Endothelial cell of umbilical vein (primary cell): ENCODE measurements at regions of chr1 and their contacts with region 1.

Region 1: DNA sequence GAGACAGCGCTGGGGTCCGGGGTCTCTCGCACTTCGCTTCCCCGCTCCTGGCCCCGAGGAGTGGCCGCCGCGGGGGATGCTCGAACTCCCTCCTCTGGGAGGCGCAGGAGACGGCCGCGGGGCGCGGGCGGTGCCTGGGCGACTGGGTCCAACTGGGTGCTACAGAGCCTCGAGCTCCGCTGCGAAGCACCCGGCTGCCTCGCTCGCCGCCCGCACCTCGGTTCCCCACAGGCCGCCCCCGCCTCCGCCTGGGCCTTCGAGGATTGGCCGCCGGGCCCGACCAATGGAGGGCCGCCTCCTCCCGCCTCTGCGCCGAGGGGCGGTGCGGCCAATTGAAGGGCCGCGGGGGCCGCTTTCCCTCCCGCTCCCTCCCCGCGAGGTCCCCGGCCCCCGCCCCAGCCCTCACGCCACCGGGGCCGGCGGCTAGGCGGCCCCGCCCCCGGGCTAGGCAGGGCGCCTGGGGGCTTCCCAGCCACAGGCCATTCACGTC is at the start of gene CNN3:
- DNase-seq: peak; percentile 93
- H3K4me3 ChIP-seq: peak within 1 kb of the TSS; percentile 75 to 99 (median 90)
- H3K27ac ChIP-seq: peak within 1 kb of the TSS; percentile 100
- H3K4me1 ChIP-seq: peaks cover 49% of the 10 kb centered on the region
- H3K27me3 ChIP-seq: no peaks in the 10 kb centered on the region
- CTCF ChIP-seq: no peak
- POLR2A ChIP-seq: peak; percentile 93
- total RNA-seq, gene CNN3: 317 and 392 TPM in 2 replicates

Region 2: DNA sequence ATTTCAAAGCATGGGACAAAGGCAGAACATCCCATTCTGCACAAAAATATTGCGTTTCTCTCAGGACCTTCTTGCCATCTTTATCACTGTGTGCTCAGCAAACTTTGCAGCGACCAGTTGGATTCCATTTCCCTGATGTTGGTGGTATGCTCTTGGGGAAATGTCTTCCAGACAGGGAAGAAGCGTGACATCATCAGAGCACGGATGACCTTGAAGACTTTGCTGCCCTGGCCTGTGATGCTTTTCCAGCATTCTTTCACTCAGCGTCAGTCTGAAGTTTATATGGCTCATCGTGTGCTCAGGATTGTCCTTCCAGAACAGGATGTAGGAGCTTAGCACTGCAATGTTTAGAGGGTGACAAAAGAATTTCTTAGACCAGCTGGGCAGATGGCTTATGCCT is 254.0 kb before region 1 on chr1:
- CTCF ChIA-PET with region 1: no interaction called
- POLR2A ChIA-PET with region 1: no interaction called
- dilution Hi-C with region 1: no loop called
- intact Hi-C with region 1: no loop called
- DNase-seq: no peak
- H3K4me3 ChIP-seq: no peak overlapping the region
- H3K27ac ChIP-seq: no peak overlapping the region
- H3K4me1 ChIP-seq: no peaks in the 10 kb centered on the region
- H3K27me3 ChIP-seq: peaks cover 7 to 19% of the 10 kb centered on the region in 2 experiments
- CTCF ChIP-seq: no peak
- POLR2A ChIP-seq: no peak

Region 3: DNA sequence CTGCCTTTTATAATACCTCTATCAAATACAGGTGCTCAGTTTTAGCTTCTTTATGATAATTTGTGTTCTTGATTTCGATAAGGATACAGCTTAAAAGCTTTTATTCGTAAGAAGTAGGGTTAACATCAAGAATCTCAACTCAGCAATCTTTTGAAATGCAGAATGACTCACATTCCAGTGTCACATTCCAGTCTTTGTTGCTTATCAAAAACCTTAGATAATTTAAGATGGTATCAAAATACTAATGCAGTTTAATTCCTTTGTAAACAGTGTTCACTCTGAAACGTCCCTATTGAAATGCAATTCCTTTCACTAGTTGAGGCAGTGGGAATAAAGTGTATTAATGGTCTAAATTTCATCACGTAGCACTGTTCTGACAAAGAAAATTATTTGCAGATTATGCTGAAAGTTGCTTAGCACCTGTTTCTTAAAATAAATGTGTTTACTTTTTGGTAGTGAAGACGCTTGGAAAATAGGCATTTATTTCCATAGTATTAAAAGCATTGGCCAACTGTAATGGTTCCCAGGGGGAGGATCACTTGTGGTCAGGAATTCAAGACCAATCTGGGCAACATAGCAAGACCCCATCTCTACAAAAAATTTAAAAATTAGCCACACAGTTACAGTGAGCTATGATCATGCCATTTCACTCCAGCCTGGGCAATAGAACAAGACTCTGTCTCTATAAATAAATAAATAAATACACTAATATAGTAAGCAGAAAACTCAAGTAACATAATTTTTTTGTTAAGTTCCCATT is 10.1 kb after region 1 on chr1:
- CTCF ChIA-PET with region 1: interaction called, 16 read pairs
- POLR2A ChIA-PET with region 1: no interaction called
- dilution Hi-C with region 1: no loop called
- intact Hi-C with region 1: loop called (anchors 1 kb)
- DNase-seq: peak; percentile 65
- H3K4me3 ChIP-seq: no peak overlapping the region
- H3K27ac ChIP-seq: peak overlapping the region; percentile 20
- H3K4me1 ChIP-seq: peaks cover 35% of the 10 kb centered on the region
- H3K27me3 ChIP-seq: no peaks in the 10 kb centered on the region
- CTCF ChIP-seq: no peak
- POLR2A ChIP-seq: no peak

Region 4: DNA sequence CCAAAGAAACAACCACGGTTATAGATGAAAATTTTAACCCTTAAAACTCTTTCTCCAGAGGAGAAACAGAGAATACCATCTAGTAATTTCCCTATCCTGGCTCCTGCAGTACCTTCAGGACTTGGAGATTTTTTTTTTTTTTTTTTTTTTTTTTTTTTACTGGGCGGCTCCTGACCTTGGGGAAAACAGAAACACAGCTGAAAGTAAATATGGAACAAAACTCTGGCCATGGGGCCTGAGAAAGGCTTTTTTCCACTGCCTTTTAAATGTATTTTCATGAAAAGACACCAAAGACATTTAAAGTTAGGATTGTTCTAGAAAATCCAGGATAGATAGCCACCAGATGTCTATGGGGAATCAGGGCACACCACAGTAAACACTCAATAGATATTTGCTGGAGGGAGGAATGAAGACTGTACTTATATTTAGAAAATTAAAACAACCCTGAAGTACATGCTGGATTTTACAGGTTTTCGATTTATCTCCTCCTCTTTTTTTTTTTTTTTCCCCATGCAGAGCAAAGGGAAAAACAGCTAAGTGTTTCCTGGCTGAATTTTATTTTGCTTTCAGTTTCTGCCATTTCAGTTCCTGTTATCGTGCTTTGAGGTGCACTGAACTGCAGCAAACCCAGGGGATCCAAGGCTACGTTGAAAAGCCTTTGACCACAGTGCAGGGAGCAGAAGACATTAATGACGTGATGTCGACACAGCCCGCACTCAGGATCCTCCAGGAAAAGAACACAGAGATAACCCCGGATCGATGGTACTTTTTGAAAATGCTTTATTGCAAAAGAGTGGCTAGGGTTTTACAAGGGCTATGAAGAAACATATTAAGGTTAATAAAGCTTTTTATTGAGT is 35.7 kb after region 1 on chr1:
- CTCF ChIA-PET with region 1: no interaction called
- POLR2A ChIA-PET with region 1: no interaction called
- dilution Hi-C with region 1: no loop called
- intact Hi-C with region 1: loop called (anchors 1 kb)
- DNase-seq: peak; percentile 75
- H3K4me3 ChIP-seq: peak overlapping the region; percentile 22 to 68 (median 25)
- H3K27ac ChIP-seq: peak overlapping the region; percentile 48
- H3K4me1 ChIP-seq: peaks cover 23% of the 10 kb centered on the region
- H3K27me3 ChIP-seq: no peaks in the 10 kb centered on the region
- CTCF ChIP-seq: no peak
- POLR2A ChIP-seq: no peak

Region 5: GRCh38 chr1:95013950-95014574 is 87.1 kb after region 1 on chr1:
- CTCF ChIA-PET with region 1: no interaction called
- POLR2A ChIA-PET with region 1: no interaction called
- dilution Hi-C with region 1: no loop called
- intact Hi-C with region 1: loop called (anchors 1 kb)
- DNase-seq: peak; percentile 86
- H3K4me3 ChIP-seq: no peak overlapping the region
- H3K27ac ChIP-seq: peak overlapping the region; percentile 55
- H3K4me1 ChIP-seq: peaks cover 13% of the 10 kb centered on the region
- H3K27me3 ChIP-seq: no peaks in the 10 kb centered on the region
- CTCF ChIP-seq: no peak
- POLR2A ChIP-seq: no peak